OCI-LY7 (cell line): ENCODE measurements at regions of chr11 and their contacts with region 1.

Region 1: DNA sequence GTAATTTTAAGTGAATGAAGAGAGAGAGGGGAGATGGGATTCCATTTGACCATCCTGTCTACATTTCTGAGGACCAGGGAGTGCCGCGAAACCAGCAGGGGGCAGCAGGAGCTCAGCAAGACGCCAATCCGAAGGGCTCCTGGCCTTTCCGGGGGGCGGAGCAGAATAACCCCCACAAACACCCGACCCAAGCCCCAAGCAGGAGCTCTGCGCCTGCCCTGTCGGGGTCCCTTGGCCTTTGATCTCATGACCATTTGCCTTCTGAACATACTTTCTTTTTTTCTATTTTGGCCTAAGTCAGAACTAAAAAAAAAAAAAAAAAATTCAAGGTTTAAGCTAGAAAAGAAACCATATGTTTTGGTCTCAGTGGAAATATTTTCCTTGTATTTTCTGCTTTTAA is 21.9 kb upstream of the SCN2B start:
- DNase-seq: peak; percentile 87
- H3K4me3 ChIP-seq: peak overlapping the region; percentile 8
- H3K27ac ChIP-seq: no peak overlapping the region
- H3K4me1 ChIP-seq: no peaks in the 10 kb centered on the region
- CTCF ChIP-seq: peak; percentile 98

Region 2: GRCh38 chr11:118247047-118247446 is 48.7 kb after region 1 on chr11:
- CTCF ChIA-PET with region 1: no interaction called
- POLR2A ChIA-PET with region 1: no interaction called
- intact Hi-C with region 1: no loop called
- DNase-seq: no peak
- H3K4me3 ChIP-seq: no peak overlapping the region
- H3K27ac ChIP-seq: no peak overlapping the region
- H3K4me1 ChIP-seq: no peaks in the 10 kb centered on the region
- CTCF ChIP-seq: no peak

Region 3: GRCh38 chr11:118289401-118289800 is 91.0 kb after region 1 on chr11:
- CTCF ChIA-PET with region 1: interaction called, 5 read pairs
- POLR2A ChIA-PET with region 1: interaction called, 4 read pairs
- intact Hi-C with region 1: loop called (anchors 2 kb)
- DNase-seq: no peak
- H3K4me3 ChIP-seq: no peak overlapping the region
- H3K27ac ChIP-seq: no peak overlapping the region
- H3K4me1 ChIP-seq: no peaks in the 10 kb centered on the region
- CTCF ChIP-seq: no peak

Region 4: DNA sequence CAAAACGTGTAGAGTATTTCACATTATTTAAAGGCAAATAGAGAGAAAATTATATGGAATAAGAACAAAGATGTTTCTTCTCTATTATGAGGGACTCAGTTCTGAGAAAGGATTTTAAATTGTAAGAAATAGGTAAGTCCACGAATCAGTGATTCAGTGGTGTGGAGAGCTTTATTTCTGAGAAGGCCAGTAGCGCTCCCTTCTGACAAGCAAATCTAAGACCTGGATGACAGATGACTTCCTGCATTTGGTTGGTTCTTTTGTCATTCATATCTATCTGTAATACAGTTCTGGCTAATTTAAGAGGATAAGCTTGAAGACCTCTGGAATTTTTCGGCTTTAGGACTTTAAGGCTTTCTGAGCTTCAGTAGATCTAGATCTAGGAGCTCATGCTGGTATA is 113.1 kb after region 1 on chr11:
- CTCF ChIA-PET with region 1: interaction called, 8 read pairs
- POLR2A ChIA-PET with region 1: interaction called, 4 read pairs
- intact Hi-C with region 1: loop called (anchors 1 kb)
- DNase-seq: peak; percentile 50
- H3K4me3 ChIP-seq: peak overlapping the region; percentile 43
- H3K27ac ChIP-seq: peak overlapping the region; percentile 99
- H3K4me1 ChIP-seq: peaks cover 60% of the 10 kb centered on the region
- CTCF ChIP-seq: peak; percentile 66

Region 5: DNA sequence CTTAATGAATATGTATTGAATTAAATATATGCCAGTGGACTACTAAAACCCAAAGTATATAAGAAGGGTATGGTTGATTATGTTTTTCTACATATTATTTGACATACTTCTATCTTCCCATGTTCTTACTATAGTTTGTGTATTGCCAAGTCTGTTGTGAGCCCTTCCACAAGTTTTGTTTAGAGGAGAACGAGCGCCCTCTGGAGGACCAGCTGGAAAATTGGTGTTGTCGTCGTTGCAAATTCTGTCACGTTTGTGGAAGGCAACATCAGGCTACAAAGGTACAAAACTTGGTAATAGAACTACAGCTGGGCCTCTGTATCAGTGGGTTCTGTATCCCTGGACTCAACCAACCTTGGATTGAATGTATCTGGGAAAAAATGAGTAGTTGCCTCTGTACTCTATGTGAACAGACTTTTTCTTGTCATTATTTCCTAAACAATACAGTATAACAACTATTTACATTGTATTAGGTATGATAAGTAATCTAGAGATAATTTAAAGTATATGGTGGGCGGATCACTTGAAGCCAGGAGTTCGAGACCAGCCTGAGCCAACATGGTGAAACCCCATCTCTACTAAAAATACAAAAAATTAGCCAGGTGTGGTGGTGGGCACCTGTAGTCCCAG is 290.2 kb after region 1 on chr11:
- CTCF ChIA-PET with region 1: no interaction called
- POLR2A ChIA-PET with region 1: interaction called, 3 read pairs
- intact Hi-C with region 1: loop called (anchors 1 kb)
- DNase-seq: peak; percentile 79
- H3K4me3 ChIP-seq: no peak overlapping the region
- H3K27ac ChIP-seq: no peak overlapping the region
- H3K4me1 ChIP-seq: no peaks in the 10 kb centered on the region
- CTCF ChIP-seq: peak; percentile 99

Region 6: DNA sequence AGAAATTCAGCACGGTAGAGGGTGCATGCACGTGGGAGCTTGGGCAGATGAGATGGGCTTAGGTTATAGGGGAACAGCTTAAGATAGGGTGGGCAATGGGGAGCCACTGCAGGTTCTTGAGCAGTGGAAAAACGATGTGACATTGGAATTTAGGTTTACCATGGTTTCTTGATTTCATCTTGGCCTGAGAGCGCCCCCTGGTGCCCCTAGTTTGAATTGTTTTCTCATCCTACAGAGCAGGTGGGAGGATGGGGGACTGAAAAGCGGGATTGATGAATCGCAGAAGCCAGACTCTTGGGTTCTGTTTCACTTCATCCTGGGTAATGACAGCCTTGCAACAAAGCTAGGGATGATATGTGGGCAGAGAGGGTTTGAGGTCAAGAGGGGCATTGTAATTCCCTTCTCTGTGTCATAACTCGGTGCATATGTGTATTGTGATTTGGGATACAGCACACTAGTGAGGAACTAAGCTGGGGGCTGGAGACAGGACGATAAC is 1125.2 kb after region 1 on chr11:
- CTCF ChIA-PET with region 1: no interaction called
- POLR2A ChIA-PET with region 1: no interaction called
- intact Hi-C with region 1: no loop called
- DNase-seq: peak; percentile 70
- H3K4me3 ChIP-seq: no peak overlapping the region
- H3K27ac ChIP-seq: no peak overlapping the region
- H3K4me1 ChIP-seq: peaks cover 40% of the 10 kb centered on the region
- CTCF ChIP-seq: peak; percentile 94